Prostate gland (tissue), 2 donors: ENCODE measurements at regions of chr11 and their contacts with region 1.

Region 1: GRCh38 chr11:85627998-85628770 is at the start of gene TMEM126B:
- DNase-seq: peak; percentile 99
- H3K4me3 ChIP-seq: peak within 1 kb of the TSS; percentile 59 to 66
- H3K27ac ChIP-seq: peak within 1 kb of the TSS; percentile 89 to 92
- H3K4me1 ChIP-seq: no peaks in the 10 kb centered on the region
- H3K27me3 ChIP-seq: no peaks in the 10 kb centered on the region
- CTCF ChIP-seq: peak in 1 of 4 experiments; percentile 20
- POLR2A ChIP-seq: peak; percentile 94
- total RNA-seq, gene TMEM126B: 30.0 to 38.3 TPM

Region 2: GRCh38 chr11:85483861-85484260 is 144.3 kb before region 1 on chr11:
- intact Hi-C with region 1: no loop called
- DNase-seq: no peak
- H3K4me3 ChIP-seq: no peak overlapping the region
- H3K27ac ChIP-seq: no peak overlapping the region
- H3K4me1 ChIP-seq: no peaks in the 10 kb centered on the region
- H3K27me3 ChIP-seq: no peaks in the 10 kb centered on the region
- CTCF ChIP-seq: no peak
- POLR2A ChIP-seq: no peak

Region 3: DNA sequence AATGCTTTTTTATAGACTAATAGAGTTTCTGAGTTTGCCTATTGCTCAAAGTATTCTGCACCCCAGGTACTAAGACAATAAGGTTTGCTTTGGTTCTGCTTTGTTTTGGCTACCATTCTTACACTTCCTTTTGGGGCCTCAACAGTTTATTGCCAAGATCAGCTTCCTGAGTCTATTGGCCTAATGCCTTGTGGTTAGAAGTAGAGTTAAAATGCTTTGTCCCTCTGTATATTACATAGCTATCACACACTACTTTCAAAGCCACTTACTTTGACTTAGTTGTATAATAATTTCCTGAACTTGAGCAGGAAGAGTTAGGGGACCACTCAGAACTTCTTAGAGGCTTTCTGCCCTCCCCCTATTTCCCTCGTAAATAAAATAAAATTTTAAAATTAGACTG is 97.5 kb before region 1 on chr11:
- intact Hi-C with region 1: no loop called
- DNase-seq: no peak
- H3K4me3 ChIP-seq: no peak overlapping the region
- H3K27ac ChIP-seq: no peak overlapping the region
- H3K4me1 ChIP-seq: no peaks in the 10 kb centered on the region
- H3K27me3 ChIP-seq: no peaks in the 10 kb centered on the region
- CTCF ChIP-seq: no peak
- POLR2A ChIP-seq: no peak

Region 4: DNA sequence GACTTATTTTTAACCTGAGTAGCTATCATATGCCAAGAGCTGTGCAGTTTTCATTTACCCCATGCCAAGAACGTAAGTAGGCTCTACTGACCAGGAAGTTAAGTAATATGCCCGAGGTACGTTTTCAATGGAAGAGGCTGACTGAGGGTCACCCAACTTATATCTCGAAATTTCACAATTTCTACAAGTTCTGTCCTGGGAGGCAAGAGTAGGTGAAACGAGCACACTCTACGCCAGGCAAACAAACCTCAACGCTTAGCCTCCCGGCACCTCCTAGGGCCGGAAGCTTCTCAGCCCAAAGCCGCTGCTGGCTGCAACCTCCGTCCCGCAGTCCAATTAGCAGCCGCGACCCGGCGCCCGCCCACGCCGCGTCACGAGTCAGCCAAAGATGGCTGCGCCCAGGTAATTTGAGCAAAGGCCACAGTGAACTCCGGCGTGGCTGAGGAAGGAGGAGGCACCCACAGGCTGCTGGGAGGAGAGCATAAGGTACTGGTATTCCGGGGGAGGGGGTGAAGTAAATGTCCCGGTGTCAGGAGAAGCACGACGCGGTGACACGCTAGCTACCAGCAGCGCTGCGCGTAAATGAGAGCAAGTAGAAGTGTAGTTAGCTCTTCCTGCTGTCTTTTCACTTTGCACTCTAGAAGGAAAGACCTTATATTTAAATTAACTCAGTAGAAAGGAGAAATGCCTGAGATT is 19.6 kb after region 1 on chr11 and contains the start of gene TMEM126A:
- intact Hi-C with region 1: loop called (anchors 2 kb)
- DNase-seq: peak; percentile 86
- H3K4me3 ChIP-seq: peak within 1 kb of the TSS; percentile 47 to 49
- H3K27ac ChIP-seq: peak within 1 kb of the TSS; percentile 75 to 76
- H3K4me1 ChIP-seq: peaks cover 4% of the 10 kb centered on the region
- H3K27me3 ChIP-seq: no peaks in the 10 kb centered on the region
- CTCF ChIP-seq: peak in 2 of 4 experiments; percentile 14 to 23
- POLR2A ChIP-seq: peak; percentile 79
- total RNA-seq, gene TMEM126A: 13.6 to 24.4 TPM

Region 5: DNA sequence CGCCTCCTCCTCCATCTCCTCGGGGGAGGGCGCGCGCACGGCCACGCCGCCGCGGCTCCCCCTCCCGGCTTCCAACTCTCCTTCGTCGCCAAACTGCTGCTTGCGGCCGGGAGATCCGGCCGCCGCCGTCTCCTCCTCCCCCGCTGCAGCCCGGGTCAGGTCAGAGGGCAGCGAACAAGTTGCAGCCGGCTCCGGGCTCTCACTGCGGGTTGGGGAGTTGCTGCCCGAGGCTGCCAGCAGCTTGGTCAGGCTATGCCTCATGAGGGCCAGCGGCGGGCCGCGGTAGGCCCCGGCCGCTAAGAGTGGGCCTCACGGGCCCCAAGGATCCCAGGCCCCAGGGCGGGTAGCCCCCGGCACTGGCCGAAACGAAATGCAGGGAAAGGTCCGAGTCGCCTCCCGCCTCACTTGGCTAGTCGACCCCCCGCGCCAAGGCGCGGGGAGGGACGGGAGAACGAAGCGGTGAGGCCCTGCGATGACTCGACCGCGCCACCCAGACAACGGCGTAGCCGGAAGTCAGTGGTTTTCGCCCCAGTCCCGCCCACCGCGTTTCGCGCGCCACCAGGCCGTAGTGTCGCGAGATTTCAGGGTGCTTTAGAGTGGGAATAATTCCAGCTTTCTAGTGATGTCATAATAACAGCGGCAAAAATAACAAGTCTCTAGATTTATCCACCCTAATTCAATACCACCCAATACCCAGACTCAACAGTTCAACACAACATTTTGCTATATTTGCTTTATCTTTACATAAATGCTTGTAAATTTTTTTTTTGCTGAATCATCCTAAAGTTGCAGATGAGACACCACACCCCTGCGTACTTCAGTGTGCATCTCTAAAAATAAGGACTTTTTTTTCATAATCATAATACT is 36.7 kb after region 1 on chr11 and contains the start of gene CREBZF:
- intact Hi-C with region 1: loop called (anchors 2 kb)
- DNase-seq: peak; percentile 92
- H3K4me3 ChIP-seq: peak within 1 kb of the TSS; percentile 78 to 93
- H3K27ac ChIP-seq: peak within 1 kb of the TSS; percentile 95 to 98
- H3K4me1 ChIP-seq: peaks cover 2% of the 10 kb centered on the region
- H3K27me3 ChIP-seq: no peaks in the 10 kb centered on the region
- CTCF ChIP-seq: peak in 1 of 4 experiments; percentile 3
- POLR2A ChIP-seq: peak; percentile 98
- total RNA-seq, gene CREBZF: 50.2 to 89.5 TPM

Region 6: DNA sequence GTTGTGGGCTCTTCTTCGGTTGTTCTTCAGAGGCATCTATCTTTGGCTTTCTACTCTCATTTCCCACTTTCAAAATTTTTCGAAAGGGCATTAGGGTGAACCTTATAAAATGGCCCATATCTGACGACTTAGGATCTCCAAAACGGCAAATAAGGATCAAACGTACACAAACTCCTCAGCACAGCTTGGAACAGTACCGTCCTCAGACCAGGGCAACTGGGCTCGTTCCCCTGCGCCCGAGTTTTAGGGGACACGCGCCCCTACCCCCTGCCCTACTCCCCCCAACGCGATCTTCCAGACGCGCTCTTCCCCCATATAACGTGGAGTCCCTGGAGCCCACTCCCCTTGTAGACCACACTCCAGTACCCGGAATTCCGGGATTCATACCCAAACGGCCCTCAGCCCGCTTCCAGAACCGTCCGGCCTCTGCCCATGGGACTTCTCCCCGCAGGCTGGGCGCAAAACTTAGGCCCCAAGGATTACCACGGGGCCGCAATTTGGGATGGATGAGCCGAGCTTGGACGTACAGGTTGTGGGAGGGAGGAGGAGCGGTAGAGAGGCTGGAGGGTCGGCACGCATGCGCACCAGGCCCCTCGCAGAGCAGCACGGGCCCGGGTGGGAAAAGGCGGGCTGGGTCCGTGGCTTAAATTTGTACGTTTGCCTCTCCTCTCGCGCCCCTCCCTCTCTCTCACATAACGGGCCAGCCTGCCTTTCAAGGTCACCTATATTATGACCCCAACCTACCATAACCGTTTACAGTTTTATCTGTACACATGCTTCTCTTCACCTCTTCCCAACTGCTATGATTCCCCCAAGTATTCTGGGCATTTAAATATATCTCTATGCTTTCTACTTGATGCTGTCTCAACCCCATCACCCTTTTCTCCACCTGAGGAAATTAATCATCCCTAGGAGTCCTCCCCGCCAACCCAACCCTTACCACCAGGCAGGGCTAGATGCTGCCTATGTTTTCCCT is 54.4 kb after region 1 on chr11:
- intact Hi-C with region 1: loop called (anchors 5 kb)
- DNase-seq: peak; percentile 58
- H3K4me3 ChIP-seq: peak overlapping the region; percentile 52 to 57
- H3K27ac ChIP-seq: peak overlapping the region; percentile 36 to 56
- H3K4me1 ChIP-seq: no peaks in the 10 kb centered on the region
- H3K27me3 ChIP-seq: no peaks in the 10 kb centered on the region
- CTCF ChIP-seq: no peak
- POLR2A ChIP-seq: peak; percentile 13

Region 7: GRCh38 chr11:86041975-86042378 is 413.8 kb after region 1 on chr11:
- intact Hi-C with region 1: no loop called
- DNase-seq: peak; percentile 84
- H3K4me3 ChIP-seq: no peak overlapping the region
- H3K27ac ChIP-seq: peak overlapping the region in 1 of 2 donors; percentile 26
- H3K4me1 ChIP-seq: no peaks in the 10 kb centered on the region
- H3K27me3 ChIP-seq: no peaks in the 10 kb centered on the region
- CTCF ChIP-seq: peak; percentile 86 to 94 (median 88)
- POLR2A ChIP-seq: no peak